Calu3 (cell line): ENCODE measurements at regions of chr2 and their contacts with region 1.

Region 1: GRCh38 chr2:147030966-147031720 is 813.7 kb upstream of the ACVR2A start:
- DNase-seq: peak; percentile 36
- H3K4me3 Mint-ChIP-seq: peak overlapping the region; percentile 64
- H3K27ac Mint-ChIP-seq: peak overlapping the region; percentile 79
- H3K4me1 Mint-ChIP-seq: peaks cover 71% of the 10 kb centered on the region
- H3K27me3 Mint-ChIP-seq: no peaks in the 10 kb centered on the region
- CTCF ChIP-seq: no peak

Region 2: DNA sequence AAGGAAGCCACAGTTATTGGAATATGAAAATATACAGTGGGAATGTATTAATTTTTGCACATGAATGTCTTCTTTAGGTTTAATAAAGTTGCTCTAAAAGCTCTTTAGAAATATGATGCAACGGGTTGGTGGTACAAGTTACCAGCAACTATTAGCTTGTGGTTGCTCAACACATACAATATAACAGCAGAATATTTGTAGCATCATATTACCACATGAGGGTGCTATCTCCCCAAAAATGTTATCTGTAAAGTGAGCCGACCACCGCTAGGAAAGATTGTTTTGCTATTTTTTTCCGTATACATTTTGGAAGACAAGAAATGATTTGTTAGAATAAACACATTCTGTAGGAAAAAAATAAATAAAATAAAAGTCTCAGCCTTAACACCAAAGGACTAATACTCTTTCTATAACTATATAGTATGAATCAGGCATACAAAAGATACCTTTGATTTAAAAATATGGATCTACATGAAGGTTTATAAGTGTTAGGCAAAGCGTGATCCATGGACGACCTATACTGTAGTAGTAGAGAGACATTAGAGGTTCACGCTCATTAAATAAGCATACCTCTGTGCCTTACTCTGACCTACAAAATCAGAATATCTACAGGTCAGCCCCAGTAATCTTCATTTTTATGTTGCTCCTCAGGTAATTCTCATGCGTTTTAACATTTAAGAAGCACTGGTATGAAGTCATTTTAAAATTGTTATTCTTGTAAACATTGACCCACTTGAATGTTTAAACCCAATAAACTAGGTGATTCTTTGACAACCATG is 296.9 kb before region 1 on chr2:
- CTCF ChIA-PET with region 1: no interaction called
- intact Hi-C with region 1: loop called (anchors 10 kb)
- DNase-seq: peak; percentile 16
- H3K4me3 Mint-ChIP-seq: no peak overlapping the region
- H3K27ac Mint-ChIP-seq: no peak overlapping the region
- H3K4me1 Mint-ChIP-seq: no peaks in the 10 kb centered on the region
- H3K27me3 Mint-ChIP-seq: no peaks in the 10 kb centered on the region
- CTCF ChIP-seq: peak; percentile 49

Region 3: GRCh38 chr2:146837857-146838256 is 193.3 kb before region 1 on chr2:
- CTCF ChIA-PET with region 1: no interaction called
- intact Hi-C with region 1: no loop called
- DNase-seq: no peak
- H3K4me3 Mint-ChIP-seq: no peak overlapping the region
- H3K27ac Mint-ChIP-seq: no peak overlapping the region
- H3K4me1 Mint-ChIP-seq: no peaks in the 10 kb centered on the region
- H3K27me3 Mint-ChIP-seq: no peaks in the 10 kb centered on the region
- CTCF ChIP-seq: no peak

Region 4: GRCh38 chr2:147204102-147204501 is 173.0 kb after region 1 on chr2:
- CTCF ChIA-PET with region 1: no interaction called
- intact Hi-C with region 1: no loop called
- DNase-seq: no peak
- H3K4me3 Mint-ChIP-seq: no peak overlapping the region
- H3K27ac Mint-ChIP-seq: no peak overlapping the region
- H3K4me1 Mint-ChIP-seq: peaks cover 9% of the 10 kb centered on the region
- H3K27me3 Mint-ChIP-seq: no peaks in the 10 kb centered on the region
- CTCF ChIP-seq: no peak

Region 5: GRCh38 chr2:147425437-147426029 is 394.4 kb after region 1 on chr2:
- CTCF ChIA-PET with region 1: no interaction called
- intact Hi-C with region 1: loop called (anchors 2 kb)
- DNase-seq: no peak
- H3K4me3 Mint-ChIP-seq: peak overlapping the region; percentile 15
- H3K27ac Mint-ChIP-seq: peak overlapping the region; percentile 42
- H3K4me1 Mint-ChIP-seq: peaks cover 65% of the 10 kb centered on the region
- H3K27me3 Mint-ChIP-seq: no peaks in the 10 kb centered on the region
- CTCF ChIP-seq: no peak

Region 6: DNA sequence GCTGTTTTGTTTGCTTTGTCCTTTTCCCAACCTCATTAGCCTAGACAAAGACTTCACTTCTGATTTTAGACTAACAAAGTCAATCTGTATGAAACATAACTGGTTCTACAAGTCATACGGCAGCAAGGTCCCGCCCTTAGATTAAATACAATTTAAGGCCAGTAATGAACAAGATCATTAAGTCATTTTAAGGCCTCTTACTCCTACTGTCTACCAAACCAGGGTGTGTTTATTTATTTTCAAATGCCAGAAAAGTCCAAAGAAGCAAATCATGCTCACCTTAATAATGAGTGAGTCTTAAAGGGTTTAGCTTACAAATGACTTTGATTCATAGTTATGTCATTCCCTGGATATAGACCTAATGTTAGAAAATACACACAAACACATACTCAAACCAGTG is 665.3 kb after region 1 on chr2:
- CTCF ChIA-PET with region 1: no interaction called
- intact Hi-C with region 1: no loop called
- DNase-seq: peak; percentile 29
- H3K4me3 Mint-ChIP-seq: no peak overlapping the region
- H3K27ac Mint-ChIP-seq: peak overlapping the region; percentile 47
- H3K4me1 Mint-ChIP-seq: peaks cover 31% of the 10 kb centered on the region
- H3K27me3 Mint-ChIP-seq: no peaks in the 10 kb centered on the region
- CTCF ChIP-seq: no peak

Region 7: GRCh38 chr2:147844697-147845410 is 813.7 kb after region 1 on chr2 and contains the start of gene ACVR2A:
- CTCF ChIA-PET with region 1: no interaction called
- intact Hi-C with region 1: loop called (anchors 5 kb)
- DNase-seq: peak; percentile 27
- H3K4me3 Mint-ChIP-seq: peak within 1 kb of the TSS; percentile 83
- H3K27ac Mint-ChIP-seq: peak within 1 kb of the TSS; percentile 60
- H3K4me1 Mint-ChIP-seq: peaks cover 37% of the 10 kb centered on the region
- H3K27me3 Mint-ChIP-seq: no peaks in the 10 kb centered on the region
- CTCF ChIP-seq: no peak
- total RNA-seq, gene ACVR2A: 12.5 and 14.8 TPM in 2 replicates